ENCODE measurements at regions of chr17 and their contacts with region 1.

Region 1: DNA sequence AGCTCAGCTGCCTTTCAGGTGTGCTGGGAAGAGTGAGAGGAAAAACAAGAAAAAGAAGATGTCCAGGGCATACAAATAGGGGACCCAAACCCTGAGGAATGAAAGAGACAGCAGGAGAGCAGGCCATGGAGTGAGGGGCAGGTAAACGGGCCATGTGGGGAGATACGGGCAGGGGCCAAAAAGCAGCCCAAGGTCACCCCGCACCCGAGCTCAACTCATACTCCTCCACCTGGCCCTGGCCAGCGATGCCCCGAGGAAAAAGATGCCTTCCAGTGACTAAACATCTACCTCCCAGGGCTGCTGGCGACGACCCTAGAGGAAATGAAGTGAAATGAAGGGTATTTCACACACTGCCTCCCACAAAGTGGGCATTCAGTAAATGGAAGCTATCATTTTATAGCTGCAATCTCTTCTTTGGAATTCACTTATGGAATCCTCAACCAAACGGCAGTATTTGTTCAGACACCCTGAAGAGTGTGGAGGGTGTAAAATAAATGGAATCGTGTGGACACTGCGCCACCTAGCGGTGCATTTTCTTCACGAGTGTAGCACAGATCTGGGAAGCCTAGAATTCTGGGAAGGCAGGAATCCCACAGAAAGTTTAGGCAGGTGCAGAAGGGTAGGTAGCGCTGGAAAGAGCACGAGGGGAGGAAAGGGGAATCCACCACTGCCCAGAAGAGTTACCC is 14.9 kb downstream of the ELAC2 start:
- DNase-seq: peak; percentile 67
- H3K4me3 ChIP-seq: no peak overlapping the region
- H3K27ac ChIP-seq: no peak overlapping the region
- H3K4me1 ChIP-seq: no peaks in the 10 kb centered on the region
- CTCF ChIP-seq: peak; percentile 97

Region 2: GRCh38 chr17:12256380-12256995 is 746.4 kb before region 1 on chr17:
- CTCF ChIA-PET with region 1: no interaction called
- POLR2A ChIA-PET with region 1: no interaction called
- intact Hi-C with region 1: loop called (anchors 10 kb)
- DNase-seq: peak; percentile 59
- H3K4me3 ChIP-seq: no peak overlapping the region
- H3K27ac ChIP-seq: no peak overlapping the region
- H3K4me1 ChIP-seq: no peaks in the 10 kb centered on the region
- CTCF ChIP-seq: peak; percentile 95

Region 3: DNA sequence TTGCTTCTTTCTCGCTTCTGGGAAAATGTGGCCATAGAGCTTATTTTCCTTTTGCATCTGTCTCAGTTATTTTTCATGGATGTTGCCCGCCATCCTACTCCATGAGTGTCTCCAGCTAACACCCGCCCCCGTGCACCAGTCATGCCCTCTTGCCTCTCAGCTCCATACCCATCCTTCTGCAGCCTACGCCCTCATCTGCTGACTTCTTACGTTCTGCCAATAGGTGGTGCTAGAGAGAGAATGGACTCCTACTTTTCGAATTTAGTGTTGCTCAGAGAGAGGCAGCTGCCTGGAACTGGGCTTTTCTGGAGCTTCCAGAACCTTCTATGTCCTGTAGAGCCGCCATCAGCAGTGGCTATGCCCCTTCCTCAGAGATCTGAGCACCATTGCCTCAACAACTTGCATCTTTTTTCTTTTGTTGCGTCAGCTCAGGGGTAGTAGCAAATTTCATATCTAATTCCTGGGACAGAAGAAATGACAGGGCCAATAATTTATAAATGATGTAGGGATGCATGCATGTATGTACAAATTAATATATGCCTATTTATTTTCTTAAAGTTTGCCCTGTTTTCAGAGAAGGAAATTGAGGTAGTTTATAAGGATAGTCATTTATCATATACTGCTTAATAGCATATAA is 456.9 kb before region 1 on chr17:
- CTCF ChIA-PET with region 1: no interaction called
- POLR2A ChIA-PET with region 1: no interaction called
- intact Hi-C with region 1: loop called (anchors 1 kb)
- DNase-seq: peak; percentile 50
- H3K4me3 ChIP-seq: no peak overlapping the region
- H3K27ac ChIP-seq: no peak overlapping the region
- H3K4me1 ChIP-seq: no peaks in the 10 kb centered on the region
- CTCF ChIP-seq: peak; percentile 84

Region 4: DNA sequence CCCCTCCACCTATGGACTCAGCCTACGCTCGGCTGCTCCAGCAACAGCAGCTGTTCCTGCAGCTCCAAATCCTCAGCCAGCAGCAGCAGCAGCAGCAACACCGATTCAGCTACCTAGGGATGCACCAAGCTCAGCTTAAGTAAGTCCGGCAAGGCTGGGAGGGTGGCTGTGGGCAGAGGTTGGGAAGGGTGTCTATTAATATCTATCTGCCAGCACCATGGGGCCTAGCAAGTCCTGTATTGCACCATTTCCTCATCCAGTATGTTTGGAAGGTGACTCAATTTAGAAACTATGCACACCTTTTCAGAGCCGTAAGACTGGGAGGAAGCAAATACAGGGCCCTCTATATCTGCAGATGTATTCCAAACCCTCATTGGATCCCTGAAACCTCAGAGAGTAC is 258.6 kb before region 1 on chr17:
- CTCF ChIA-PET with region 1: no interaction called
- POLR2A ChIA-PET with region 1: no interaction called
- intact Hi-C with region 1: loop called (anchors 5 kb)
- DNase-seq: no peak
- H3K4me3 ChIP-seq: no peak overlapping the region
- H3K27ac ChIP-seq: no peak overlapping the region
- H3K4me1 ChIP-seq: no peaks in the 10 kb centered on the region
- CTCF ChIP-seq: no peak

Region 5: GRCh38 chr17:12928741-12929140 is 74.2 kb before region 1 on chr17:
- CTCF ChIA-PET with region 1: no interaction called
- POLR2A ChIA-PET with region 1: no interaction called
- intact Hi-C with region 1: loop called (anchors 5 kb)
- DNase-seq: peak; percentile 48
- H3K4me3 ChIP-seq: no peak overlapping the region
- H3K27ac ChIP-seq: peak overlapping the region; percentile 87
- H3K4me1 ChIP-seq: peaks cover 27% of the 10 kb centered on the region
- CTCF ChIP-seq: peak; percentile 73